ENCODE measurements at regions of chr12 and their contacts with region 1.

Region 1: DNA sequence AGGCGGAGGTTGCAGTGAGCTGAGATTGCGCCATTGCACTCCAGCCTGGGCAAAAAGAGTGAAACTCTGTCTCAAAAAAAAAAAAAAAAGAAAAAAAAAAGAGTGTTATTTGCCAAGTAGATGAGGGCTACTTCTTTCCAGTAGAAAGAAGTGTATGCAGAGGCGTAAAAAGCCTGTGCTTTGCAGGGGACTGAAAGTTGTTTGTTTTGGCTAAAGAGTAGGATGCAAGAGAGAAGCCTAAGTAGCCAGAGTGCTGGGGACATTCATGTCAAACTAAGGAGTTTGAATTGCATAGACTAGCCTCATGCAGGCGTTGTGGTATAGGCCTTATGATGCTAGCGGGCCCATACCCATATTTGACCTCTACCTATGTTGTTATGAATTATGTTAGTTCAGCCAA is 9.5 kb downstream of the HSD17B6 start:
- DNase-seq: no peak

Region 2: GRCh38 chr12:56716458-56716857 is 56.2 kb before region 1 on chr12:
- intact Hi-C with region 1: loop called in 1 of 2 experiments (anchors 2 kb)
- DNase-seq: peak; percentile 49

Region 3: DNA sequence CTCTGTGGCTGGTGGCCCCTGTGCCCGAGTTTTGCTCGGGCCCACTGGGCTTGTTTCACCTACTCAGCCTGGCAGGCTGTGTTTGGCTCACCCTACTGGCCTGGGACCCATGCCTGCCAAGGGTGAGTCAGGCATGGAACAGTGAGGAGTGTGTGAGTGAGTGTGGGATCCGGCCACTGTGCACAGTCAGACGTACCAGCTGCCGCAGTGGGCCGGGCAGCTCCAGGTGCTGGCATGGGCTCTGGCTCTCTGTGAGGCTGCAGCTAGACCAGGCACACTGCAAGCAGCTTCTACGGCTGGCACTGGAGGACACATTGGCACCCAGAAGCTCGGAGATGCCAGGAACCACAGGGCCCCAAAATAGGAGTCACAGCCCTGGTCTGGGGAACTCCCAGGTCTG is 31.1 kb after region 1 on chr12:
- intact Hi-C with region 1: no loop called
- DNase-seq: no peak

Measured in posterior vena cava (tissue), 2 donors.